B cell (primary cell): ENCODE measurements at regions of chr1 and their contacts with region 1.

Region 1: DNA sequence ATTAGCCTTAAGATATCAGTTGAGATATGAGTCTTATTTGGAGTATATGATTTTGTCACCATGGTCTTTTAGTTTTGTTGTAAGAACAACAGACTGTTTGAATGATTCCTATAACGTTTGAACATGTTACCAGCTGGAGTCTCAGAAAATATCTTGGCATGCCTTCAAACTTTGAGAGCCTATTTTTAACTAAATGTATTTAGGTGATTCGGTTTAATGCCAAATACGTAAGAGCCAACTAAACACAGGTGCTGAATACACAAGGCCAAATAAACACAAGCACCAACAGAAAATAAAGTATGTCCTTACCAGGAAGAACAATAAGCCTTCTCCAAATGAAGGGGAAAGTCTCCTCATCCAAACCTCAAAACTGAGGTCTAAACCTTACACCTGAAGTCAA is 48.6 kb downstream of the PRKACB start:
- DNase-seq: no peak
- ATAC-seq: no peak
- H3K4me3 ChIP-seq: no peak overlapping the region
- H3K4me3 Mint-ChIP-seq: no peak overlapping the region
- H3K27ac ChIP-seq: no peak overlapping the region
- H3K27ac Mint-ChIP-seq: no peak overlapping the region
- H3K4me1 ChIP-seq: no peaks in the 10 kb centered on the region
- H3K4me1 Mint-ChIP-seq: no peaks in the 10 kb centered on the region
- H3K27me3 ChIP-seq: no peaks in the 10 kb centered on the region
- H3K27me3 Mint-ChIP-seq: no peaks in the 10 kb centered on the region
- CTCF ChIP-seq: no peak

Region 2: DNA sequence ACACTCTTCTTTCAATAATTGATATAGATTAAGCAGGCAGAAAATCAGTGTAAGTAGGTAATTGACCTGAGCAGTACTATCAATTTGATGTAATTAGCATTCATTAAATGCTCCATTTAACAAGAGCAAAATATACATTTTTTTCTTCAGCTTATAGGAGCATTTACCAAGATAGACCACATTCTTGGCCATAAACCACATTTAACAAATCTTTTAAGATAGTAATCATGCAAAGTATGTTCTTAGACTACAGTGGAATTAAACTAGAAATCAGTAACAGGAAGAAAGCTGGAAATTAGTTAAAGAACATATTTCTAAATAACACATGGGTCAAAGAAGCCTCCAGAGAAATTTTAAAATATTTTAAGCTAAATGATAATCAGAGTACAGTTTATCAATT is 57.3 kb before region 1 on chr1:
- CTCF ChIA-PET with region 1: no interaction called
- POLR2A ChIA-PET with region 1: no interaction called
- intact Hi-C with region 1: no loop called
- DNase-seq: no peak
- ATAC-seq: no peak
- H3K4me3 ChIP-seq: no peak overlapping the region
- H3K4me3 Mint-ChIP-seq: no peak overlapping the region
- H3K27ac ChIP-seq: no peak overlapping the region
- H3K27ac Mint-ChIP-seq: no peak overlapping the region
- H3K4me1 ChIP-seq: no peaks in the 10 kb centered on the region
- H3K4me1 Mint-ChIP-seq: peaks cover 4% of the 10 kb centered on the region
- H3K27me3 ChIP-seq: no peaks in the 10 kb centered on the region
- H3K27me3 Mint-ChIP-seq: no peaks in the 10 kb centered on the region
- CTCF ChIP-seq: no peak

Region 3: DNA sequence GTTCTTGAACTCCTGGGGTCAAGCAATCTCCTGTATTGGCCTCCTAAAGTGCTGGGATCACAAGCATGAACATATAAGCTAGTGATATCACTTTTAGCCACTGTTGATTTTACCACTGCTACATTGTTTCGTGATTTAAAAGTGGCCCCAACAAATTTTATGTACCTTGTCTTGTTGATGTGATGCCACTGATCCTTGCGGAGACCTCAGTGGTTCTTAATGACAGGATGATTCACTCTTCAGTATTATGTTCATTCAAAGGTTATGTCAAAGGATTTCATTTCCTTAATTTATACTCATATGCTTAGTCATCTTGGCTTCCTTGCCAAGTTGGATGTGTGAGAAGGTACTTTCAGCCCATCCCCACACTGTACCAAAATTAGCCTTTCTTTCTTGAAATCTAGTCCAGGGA is 36.5 kb before region 1 on chr1:
- CTCF ChIA-PET with region 1: no interaction called
- POLR2A ChIA-PET with region 1: no interaction called
- intact Hi-C with region 1: loop called (anchors 5 kb)
- DNase-seq: no peak
- ATAC-seq: peak; percentile 31
- H3K4me3 ChIP-seq: no peak overlapping the region
- H3K4me3 Mint-ChIP-seq: no peak overlapping the region
- H3K27ac ChIP-seq: no peak overlapping the region
- H3K27ac Mint-ChIP-seq: peak overlapping the region; percentile 28
- H3K4me1 ChIP-seq: peaks cover 28 to 40% of the 10 kb centered on the region in 2 donors
- H3K4me1 Mint-ChIP-seq: peaks cover 74% of the 10 kb centered on the region
- H3K27me3 ChIP-seq: no peaks in the 10 kb centered on the region
- H3K27me3 Mint-ChIP-seq: no peaks in the 10 kb centered on the region
- CTCF ChIP-seq: no peak